ENCODE measurements at regions of chr2 and their contacts with region 1.

Region 1: DNA sequence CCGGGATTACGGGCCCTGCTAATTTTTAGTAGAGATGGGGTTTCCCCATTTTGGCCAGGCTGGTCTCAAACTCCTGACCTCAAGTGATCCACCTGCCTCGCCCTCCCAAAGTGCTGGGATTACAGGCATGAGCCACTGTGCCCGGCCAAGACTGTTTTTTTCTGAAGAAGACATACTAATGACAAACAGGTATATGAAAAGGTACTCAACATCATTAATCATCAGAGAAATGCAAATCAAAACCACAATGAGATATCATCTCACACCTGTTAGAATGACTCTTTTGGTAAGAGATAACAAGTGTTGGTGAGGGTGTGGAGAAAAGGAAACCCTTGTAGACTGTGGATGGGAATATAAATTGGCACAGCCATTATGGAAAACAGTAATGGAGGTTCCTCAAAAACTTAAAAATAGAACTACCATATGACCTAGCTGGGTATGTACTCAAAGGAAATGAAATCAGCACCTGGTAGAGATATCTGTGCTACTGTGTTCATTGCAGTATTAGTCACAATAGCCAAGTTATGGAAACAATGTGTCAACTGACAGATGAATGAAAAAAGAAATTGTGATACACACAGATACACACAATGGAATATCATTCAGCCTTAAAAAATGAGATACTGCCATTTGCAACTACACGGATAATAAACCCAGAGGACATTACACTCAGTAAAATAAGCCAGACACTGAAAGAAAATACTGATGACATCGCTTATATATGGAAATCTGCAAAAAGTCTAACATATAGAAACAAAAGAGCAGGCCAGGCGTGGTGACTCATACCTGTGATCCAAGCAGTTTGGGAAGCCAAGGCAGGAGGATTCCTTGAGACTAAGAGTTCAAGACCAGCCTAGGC is 20.8 kb downstream of the SOS1 start:
- H3K4me3 Mint-ChIP-seq: no peak overlapping the region
- H3K27ac Mint-ChIP-seq: no peak overlapping the region
- H3K4me1 Mint-ChIP-seq: peaks cover 31% of the 10 kb centered on the region
- H3K27me3 Mint-ChIP-seq: no peaks in the 10 kb centered on the region

Region 2: DNA sequence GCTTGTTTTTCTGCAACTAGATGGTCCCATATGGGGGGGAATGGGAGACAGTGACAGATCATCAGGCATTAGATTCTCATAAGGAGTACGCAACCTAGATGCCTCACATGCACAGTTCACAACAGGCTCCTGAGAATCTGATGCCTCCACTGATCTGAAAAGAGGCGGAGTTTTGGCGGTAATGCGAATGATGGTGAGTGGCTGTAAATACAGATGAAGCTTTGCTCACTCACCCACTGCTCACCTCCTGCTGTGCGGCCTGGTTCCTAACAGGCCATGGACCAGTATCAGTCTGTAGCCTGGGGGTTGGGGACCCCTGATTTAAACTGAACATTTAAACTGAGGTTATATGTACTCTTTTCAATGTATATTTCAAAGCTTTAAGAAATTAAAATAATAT is 19.9 kb before region 1 on chr2:
- intact Hi-C with region 1: loop called (anchors 1 kb)
- H3K4me3 Mint-ChIP-seq: no peak overlapping the region
- H3K27ac Mint-ChIP-seq: no peak overlapping the region
- H3K4me1 Mint-ChIP-seq: peaks cover 18% of the 10 kb centered on the region
- H3K27me3 Mint-ChIP-seq: no peaks in the 10 kb centered on the region

Measured in dendritic cell treated with granulocyte-macrophage colony-stimulating factor and Interleukin-4, amounts not matched to agents 40 ng/mL and 50 ng/mL, for 4 days (primary cell).